Panc1 (cell line): ENCODE measurements at regions of chr14 and their contacts with region 1.

Region 1: DNA sequence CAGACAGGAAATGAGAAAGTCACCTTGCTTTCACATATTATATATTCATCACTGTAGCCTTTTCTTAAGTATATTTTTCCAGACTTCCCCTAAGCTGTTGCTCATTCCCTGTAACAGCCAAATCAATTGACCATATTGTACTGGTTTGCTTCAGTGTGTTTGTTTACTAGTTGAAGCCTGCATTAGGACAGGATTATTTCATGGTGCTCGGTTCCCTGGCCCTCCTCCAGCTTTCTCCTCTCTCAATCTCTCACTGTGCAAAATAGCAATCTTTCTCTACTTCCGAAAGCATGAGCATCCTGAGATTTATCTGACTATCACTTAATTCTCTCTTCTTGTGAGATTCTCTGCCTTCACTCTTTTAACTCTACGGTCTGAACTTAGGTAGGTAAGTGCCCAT is 2.4 kb downstream of the SLC35F4 start:
- DNase-seq: no peak
- ATAC-seq: no peak
- H3K4me3 ChIP-seq: no peak overlapping the region
- H3K27ac ChIP-seq: no peak overlapping the region
- H3K4me1 ChIP-seq: no peaks in the 10 kb centered on the region
- H3K27me3 ChIP-seq: no peaks in the 10 kb centered on the region
- CTCF ChIP-seq: no peak

Region 2: DNA sequence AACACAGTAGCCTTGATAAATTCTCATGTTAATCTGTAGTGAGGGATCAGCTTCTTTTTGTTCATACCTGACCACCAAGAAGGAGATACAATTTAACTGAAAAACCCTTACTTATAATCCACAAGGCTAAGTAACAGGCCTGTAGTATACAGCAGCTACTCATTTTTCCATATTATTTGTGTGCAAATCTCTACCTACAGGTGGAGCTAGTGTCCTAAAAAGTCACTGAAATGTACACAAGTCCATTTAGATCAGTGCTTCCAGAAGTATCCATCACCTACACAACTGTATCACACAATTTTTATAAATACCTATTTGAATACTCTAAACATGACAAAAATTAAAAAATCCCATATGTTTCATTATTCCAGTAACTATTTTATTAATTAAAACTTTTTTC is 170.8 kb before region 1 on chr14:
- CTCF ChIA-PET with region 1: no interaction called
- POLR2A ChIA-PET with region 1: interaction called, 10 read pairs
- in situ Hi-C with region 1: no loop called
- intact Hi-C with region 1: no loop called
- DNase-seq: no peak
- ATAC-seq: no peak
- H3K4me3 ChIP-seq: no peak overlapping the region
- H3K27ac ChIP-seq: no peak overlapping the region
- H3K4me1 ChIP-seq: no peaks in the 10 kb centered on the region
- H3K27me3 ChIP-seq: no peaks in the 10 kb centered on the region
- CTCF ChIP-seq: peak; percentile 36; the same call in 1 of the 2 replicates

Region 3: DNA sequence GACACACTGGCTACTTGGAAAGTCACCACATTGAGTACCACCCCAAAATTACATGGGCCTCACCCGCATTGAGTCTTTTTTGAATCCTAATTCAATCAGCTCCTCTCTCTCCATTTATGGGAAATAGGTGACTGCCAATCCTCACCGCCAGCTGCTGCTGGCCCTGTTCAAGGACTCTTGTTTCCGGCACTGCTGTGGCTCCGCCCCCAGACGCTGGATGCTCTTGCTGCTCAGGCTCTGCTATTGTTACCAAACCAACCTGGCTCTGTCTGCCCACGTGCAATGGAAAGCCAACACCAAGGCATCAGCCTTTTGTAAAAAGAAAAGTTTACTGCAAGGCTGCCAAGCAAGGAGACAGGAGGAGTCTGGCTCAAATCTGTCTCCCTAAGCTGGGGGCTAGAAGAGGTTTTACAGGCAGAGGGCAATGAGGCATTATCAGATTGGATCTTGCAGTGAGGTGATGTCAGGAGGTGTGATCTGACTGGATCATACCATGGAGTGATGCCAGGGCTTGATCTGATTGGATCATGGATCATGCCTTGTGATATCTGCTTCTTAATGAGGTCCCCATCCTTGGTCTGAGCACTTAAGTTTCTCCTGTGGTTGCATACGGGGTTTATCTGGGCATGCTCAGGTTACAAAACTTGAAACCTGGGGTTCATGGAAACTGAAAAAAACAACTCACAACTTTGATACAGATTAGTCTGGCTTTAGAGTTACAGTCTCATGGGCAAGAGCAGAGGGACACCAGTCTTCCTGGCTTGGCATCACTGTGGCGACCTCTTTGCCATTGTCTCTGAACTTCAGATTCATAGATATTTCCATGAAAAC is 119.5 kb after region 1 on chr14:
- CTCF ChIA-PET with region 1: no interaction called
- POLR2A ChIA-PET with region 1: no interaction called
- in situ Hi-C with region 1: no loop called
- intact Hi-C with region 1: no loop called
- DNase-seq: no peak
- ATAC-seq: no peak
- H3K4me3 ChIP-seq: no peak overlapping the region
- H3K27ac ChIP-seq: no peak overlapping the region
- H3K4me1 ChIP-seq: no peaks in the 10 kb centered on the region
- H3K27me3 ChIP-seq: no peaks in the 10 kb centered on the region
- CTCF ChIP-seq: no peak